ENCODE measurements at regions of chr1 and their contacts with region 1.

Region 1: GRCh38 chr1:109493805-109494539 is at the start of gene CYB561D1:
- DNase-seq: peak; percentile 87 to 95 (median 89)
- H3K4me3 ChIP-seq: peak within 1 kb of the TSS; percentile 91 to 97
- H3K4me3 Mint-ChIP-seq: peak within 1 kb of the TSS; percentile 94 to 97 (median 96)
- H3K27ac ChIP-seq: peak within 1 kb of the TSS; percentile 53
- H3K27ac Mint-ChIP-seq: peak within 1 kb of the TSS; percentile 86 to 95 (median 93)
- H3K4me1 ChIP-seq: peaks cover 57% of the 10 kb centered on the region
- H3K4me1 Mint-ChIP-seq: peaks cover 30 to 60% (median 46%) of the 10 kb centered on the region in 4 donors
- H3K27me3 ChIP-seq: no peaks in the 10 kb centered on the region
- H3K27me3 Mint-ChIP-seq: no peaks in the 10 kb centered on the region
- total RNA-seq, gene CYB561D1: 40.7 to 41.6 TPM

Region 2: GRCh38 chr1:109263597-109264398 is 230.2 kb before region 1 on chr1:
- CTCF ChIA-PET with region 1: interaction called, 3 read pairs
- POLR2A ChIA-PET with region 1: no interaction called
- intact Hi-C with region 1: loop called (anchors 5 kb)
- DNase-seq: peak; percentile 59 to 70 (median 67)
- H3K4me3 ChIP-seq: no peak overlapping the region
- H3K4me3 Mint-ChIP-seq: no peak overlapping the region
- H3K27ac ChIP-seq: no peak overlapping the region
- H3K27ac Mint-ChIP-seq: peak overlapping the region in 1 of 7 donors; percentile 75
- H3K4me1 ChIP-seq: no peaks in the 10 kb centered on the region
- H3K4me1 Mint-ChIP-seq: peaks cover 0 to 4% (median under 1%) of the 10 kb centered on the region in 4 donors
- H3K27me3 ChIP-seq: no peaks in the 10 kb centered on the region
- H3K27me3 Mint-ChIP-seq: peaks cover 0 to 2% of the 10 kb centered on the region in 2 donors

Region 3: GRCh38 chr1:109277434-109278204 is 216.4 kb before region 1 on chr1:
- CTCF ChIA-PET with region 1: interaction called, 33 read pairs
- POLR2A ChIA-PET with region 1: no interaction called
- intact Hi-C with region 1: loop called (anchors 1 kb)
- DNase-seq: peak; percentile 33 to 57 (median 42)
- H3K4me3 ChIP-seq: no peak overlapping the region
- H3K4me3 Mint-ChIP-seq: no peak overlapping the region
- H3K27ac ChIP-seq: no peak overlapping the region
- H3K27ac Mint-ChIP-seq: peak overlapping the region in 1 of 7 donors; percentile 46
- H3K4me1 ChIP-seq: peaks cover 13% of the 10 kb centered on the region
- H3K4me1 Mint-ChIP-seq: peaks cover 3 to 13% (median 6%) of the 10 kb centered on the region in 4 donors
- H3K27me3 ChIP-seq: no peaks in the 10 kb centered on the region
- H3K27me3 Mint-ChIP-seq: no peaks in the 10 kb centered on the region

Region 4: DNA sequence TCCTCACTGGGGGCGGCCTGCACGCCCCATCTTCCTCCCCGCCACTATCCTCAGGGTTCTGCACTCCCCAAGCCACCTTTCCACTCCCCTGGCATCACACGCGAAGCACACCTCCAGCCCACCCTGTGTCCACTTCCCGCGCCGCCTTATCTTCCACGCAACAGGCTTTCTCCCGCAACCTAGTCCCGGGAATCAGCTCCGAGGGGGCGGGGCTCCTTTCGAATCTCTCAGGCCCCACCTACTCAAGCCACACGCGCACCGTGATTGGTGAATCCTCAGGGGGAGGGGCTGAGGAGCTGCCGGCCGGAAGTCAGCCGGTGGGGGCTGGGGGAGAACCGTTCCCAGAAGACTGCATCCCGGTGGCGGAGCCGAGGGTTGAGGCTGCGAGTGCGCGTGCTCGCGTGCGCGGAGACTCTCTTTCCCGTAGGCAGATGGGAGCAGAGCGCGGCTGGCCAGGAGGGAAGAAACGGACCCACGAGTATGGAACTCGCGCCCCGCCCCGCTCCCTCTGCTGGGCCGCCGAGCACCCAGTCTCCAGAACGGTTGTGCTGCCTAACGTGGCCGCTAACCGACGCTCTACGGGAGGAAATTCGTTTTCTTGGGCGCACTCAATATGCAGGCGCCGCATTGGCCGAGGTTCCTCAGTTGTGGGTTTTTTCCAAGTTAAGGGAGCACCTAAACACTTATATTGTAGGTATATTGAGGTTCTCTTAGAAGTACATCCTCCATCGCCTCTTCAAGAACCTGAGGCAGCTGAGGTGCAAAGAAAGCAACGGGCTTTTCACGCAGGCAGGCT is 210.8 kb before region 1 on chr1 and contains the start of gene PSRC1:
- CTCF ChIA-PET with region 1: interaction called, 33 read pairs
- POLR2A ChIA-PET with region 1: no interaction called
- intact Hi-C with region 1: loop called (anchors 2 kb)
- DNase-seq: peak; percentile 87 to 91 (median 88)
- H3K4me3 ChIP-seq: peak within 1 kb of the TSS; percentile 74 to 91
- H3K4me3 Mint-ChIP-seq: peak within 1 kb of the TSS; percentile 91 to 100 (median 96)
- H3K27ac ChIP-seq: peak within 1 kb of the TSS; percentile 59
- H3K27ac Mint-ChIP-seq: peak within 1 kb of the TSS; percentile 82 to 93 (median 92)
- H3K4me1 ChIP-seq: peaks cover 23% of the 10 kb centered on the region
- H3K4me1 Mint-ChIP-seq: peaks cover 8 to 30% (median 16%) of the 10 kb centered on the region in 4 donors
- H3K27me3 ChIP-seq: no peaks in the 10 kb centered on the region
- H3K27me3 Mint-ChIP-seq: no peaks in the 10 kb centered on the region
- total RNA-seq, gene PSRC1: 0.17 to 0.28 TPM

Region 5: GRCh38 chr1:109483672-109484518 is 10.1 kb before region 1 on chr1 and contains the start of gene ATXN7L2:
- CTCF ChIA-PET with region 1: interaction called, 594 read pairs
- POLR2A ChIA-PET with region 1: interaction called, 206 read pairs
- intact Hi-C with region 1: loop called (anchors 1 kb)
- DNase-seq: peak; percentile 92 to 95 (median 93)
- H3K4me3 ChIP-seq: peak within 1 kb of the TSS; percentile 95 to 98
- H3K4me3 Mint-ChIP-seq: peak within 1 kb of the TSS; percentile 91 to 96 (median 94)
- H3K27ac ChIP-seq: peak within 1 kb of the TSS; percentile 76
- H3K27ac Mint-ChIP-seq: peak within 1 kb of the TSS; percentile 86 to 97 (median 92)
- H3K4me1 ChIP-seq: peaks cover 20% of the 10 kb centered on the region
- H3K4me1 Mint-ChIP-seq: peaks cover 17 to 42% (median 30%) of the 10 kb centered on the region in 4 donors
- H3K27me3 ChIP-seq: peaks cover 4% of the 10 kb centered on the region
- H3K27me3 Mint-ChIP-seq: peaks cover 0 to 5% of the 10 kb centered on the region in 2 donors
- total RNA-seq, gene ATXN7L2: 7.4 to 9.0 TPM

Region 6: GRCh38 chr1:109509176-109510134 is 15.5 kb after region 1 on chr1 and contains the start of gene AMIGO1:
- CTCF ChIA-PET with region 1: interaction called, 594 read pairs
- POLR2A ChIA-PET with region 1: interaction called, 292 read pairs
- intact Hi-C with region 1: loop called (anchors 1 kb)
- DNase-seq: peak; percentile 65 to 73 (median 68)
- H3K4me3 ChIP-seq: peak within 1 kb of the TSS; percentile 55 to 82
- H3K4me3 Mint-ChIP-seq: peak within 1 kb of the TSS; percentile 92 to 95 (median 94)
- H3K27ac ChIP-seq: peak within 1 kb of the TSS; percentile 54
- H3K27ac Mint-ChIP-seq: peak within 1 kb of the TSS; percentile 85 to 97 (median 95)
- H3K4me1 ChIP-seq: peaks cover 59% of the 10 kb centered on the region
- H3K4me1 Mint-ChIP-seq: peaks cover 48 to 73% (median 60%) of the 10 kb centered on the region in 4 donors
- H3K27me3 ChIP-seq: no peaks in the 10 kb centered on the region
- H3K27me3 Mint-ChIP-seq: no peaks in the 10 kb centered on the region
- total RNA-seq, gene AMIGO1: 28.1 to 29.3 TPM

Measured in CD4-positive, alpha-beta memory T cell (primary cell).